ENCODE measurements at regions of chrX and their contacts with region 1.

Region 1: DNA sequence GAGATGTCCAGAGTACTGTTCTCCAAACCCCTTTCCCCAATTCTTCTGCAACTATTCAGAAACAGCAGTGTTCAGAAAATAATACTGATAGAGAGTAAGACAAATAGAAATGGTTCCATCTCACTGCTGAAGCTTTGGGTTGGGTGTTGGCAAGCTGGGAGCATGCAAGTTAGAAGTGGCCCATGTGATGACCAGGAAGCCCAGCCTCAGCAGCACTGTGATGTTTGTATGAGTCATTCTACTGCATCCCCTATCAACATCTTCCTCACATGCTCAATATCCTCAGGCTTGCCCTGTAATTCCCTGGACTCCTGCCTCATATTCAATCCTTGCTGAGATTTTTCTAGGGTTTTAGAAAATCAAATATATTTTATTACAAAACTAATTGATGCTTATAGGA is 96.5 kb downstream of the CHRDL1 start:
- DNase-seq: no peak
- H3K4me3 ChIP-seq: no peak overlapping the region
- H3K27ac ChIP-seq: no peak overlapping the region
- H3K4me1 ChIP-seq: no peaks in the 10 kb centered on the region
- H3K27me3 ChIP-seq: no peaks in the 10 kb centered on the region
- CTCF ChIP-seq: no peak
- EP300 ChIP-seq: no peak
- POLR2A ChIP-seq: no peak

Region 2: GRCh38 chrX:110795645-110796406 is 96.7 kb after region 1 on chrX and contains the start of gene CHRDL1:
- in situ Hi-C with region 1: loop called in 1 of 4 experiments (anchors 25 kb)
- intact Hi-C with region 1: no loop called
- DNase-seq: peak; percentile 18
- H3K4me3 ChIP-seq: peak within 1 kb of the TSS in 3 of 4 donors; percentile 14 to 34 (median 22)
- H3K27ac ChIP-seq: peak within 1 kb of the TSS in 2 of 4 donors; percentile 57 to 58
- H3K4me1 ChIP-seq: no peaks in the 10 kb centered on the region
- H3K27me3 ChIP-seq: peaks cover 7% of the 10 kb centered on the region
- CTCF ChIP-seq: no peak
- EP300 ChIP-seq: no peak
- POLR2A ChIP-seq: no peak
- total RNA-seq, gene CHRDL1: 13.5 to 46.4 (median 16.5) TPM

Region 3: GRCh38 chrX:111652719-111653118 is 953.6 kb after region 1 on chrX:
- in situ Hi-C with region 1: no loop called
- intact Hi-C with region 1: no loop called
- DNase-seq: no peak
- H3K4me3 ChIP-seq: no peak overlapping the region
- H3K27ac ChIP-seq: no peak overlapping the region
- H3K4me1 ChIP-seq: no peaks in the 10 kb centered on the region
- H3K27me3 ChIP-seq: no peaks in the 10 kb centered on the region
- CTCF ChIP-seq: no peak
- EP300 ChIP-seq: no peak
- POLR2A ChIP-seq: no peak